Activated B cell treated with CpG ODN at 0.5 μM for 24 hours (primary cell): ENCODE measurements at regions of chr10 and their contacts with region 1.

Region 1: GRCh38 chr10:100986952-100987750 is at the starts of genes MRPL43 and TWNK:
- DNase-seq: peak; percentile 81
- ATAC-seq: peak; percentile 95
- H3K4me3 Mint-ChIP-seq: peak within 1 kb of the TSS; percentile 92
- H3K27ac Mint-ChIP-seq: peak within 1 kb of the TSS; percentile 82
- H3K4me1 Mint-ChIP-seq: peaks cover 46% of the 10 kb centered on the region
- H3K27me3 Mint-ChIP-seq: no peaks in the 10 kb centered on the region
- CTCF ChIP-seq: no peak
- total RNA-seq, gene MRPL43: 44.2 and 46.3 TPM in 2 replicates
- total RNA-seq, gene TWNK: 19.2 and 20.5 TPM in 2 replicates

Region 2: DNA sequence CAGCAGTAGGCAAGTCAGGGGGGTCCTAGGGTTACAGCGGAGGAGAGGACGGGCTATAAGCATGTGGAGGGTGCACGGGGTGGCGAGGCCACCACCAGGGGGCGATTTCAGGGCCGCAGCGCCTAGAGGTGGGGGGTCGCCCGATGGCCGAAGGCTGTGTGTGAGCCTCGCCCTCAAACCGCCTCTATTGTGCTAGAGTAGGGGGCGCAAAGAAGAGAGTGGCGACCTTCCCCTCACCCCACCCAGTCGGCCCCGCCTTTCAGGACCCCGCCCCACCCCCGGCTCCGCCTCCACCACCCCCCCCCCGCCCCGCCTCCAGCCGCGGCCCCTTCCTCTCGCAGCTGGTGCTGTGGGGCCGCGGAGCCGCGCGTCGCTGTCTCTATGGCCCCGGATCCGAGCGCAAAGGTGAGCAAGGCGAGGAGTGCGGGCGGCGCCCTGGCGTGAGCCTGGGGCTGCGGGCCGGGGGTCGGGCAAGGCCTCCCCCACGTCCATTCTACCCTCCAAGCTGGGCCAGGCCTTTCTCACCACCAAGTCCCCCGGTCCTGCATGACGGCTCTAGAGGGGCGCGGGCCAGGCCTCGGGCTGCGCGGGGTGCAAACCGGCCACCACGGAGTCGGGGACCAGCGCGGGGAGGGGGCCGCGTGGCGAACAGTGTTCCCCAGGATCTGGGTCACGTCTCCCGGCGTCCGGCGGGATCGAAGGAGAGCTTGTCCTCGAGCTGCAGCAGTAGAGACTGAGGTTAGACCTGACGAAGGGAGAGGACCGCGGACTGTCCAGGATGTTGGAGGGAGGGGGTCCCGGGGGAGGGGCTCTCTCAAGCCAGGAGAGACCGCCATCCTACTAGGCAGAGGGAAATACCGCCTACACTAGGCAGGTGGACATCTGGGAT is 17.7 kb before region 1 on chr10 and contains the start of gene SEMA4G:
- CTCF ChIA-PET with region 1: interaction called, 4 read pairs
- POLR2A ChIA-PET with region 1: interaction called, 10 read pairs
- intact Hi-C with region 1: loop called (anchors 2 kb)
- DNase-seq: peak; percentile 58
- ATAC-seq: peak; percentile 88
- H3K4me3 Mint-ChIP-seq: peak within 1 kb of the TSS; percentile 64
- H3K27ac Mint-ChIP-seq: no peak within 1 kb of the TSS
- H3K4me1 Mint-ChIP-seq: peaks cover 11% of the 10 kb centered on the region
- H3K27me3 Mint-ChIP-seq: no peaks in the 10 kb centered on the region
- CTCF ChIP-seq: no peak
- total RNA-seq, gene SEMA4G: 0.60 and 0.78 TPM in 2 replicates